ENCODE measurements at regions of chrX and their contacts with region 1.

Region 1: GRCh38 chrX:104195489-104196084 is 29.3 kb downstream of the FAM199X start:
- DNase-seq: peak; percentile 22
- H3K4me3 ChIP-seq: no peak overlapping the region
- H3K27ac ChIP-seq: no peak overlapping the region
- H3K4me1 ChIP-seq: peaks cover 7% of the 10 kb centered on the region
- H3K27me3 ChIP-seq: no peaks in the 10 kb centered on the region
- CTCF ChIP-seq: peak; percentile 79 to 93

Region 2: DNA sequence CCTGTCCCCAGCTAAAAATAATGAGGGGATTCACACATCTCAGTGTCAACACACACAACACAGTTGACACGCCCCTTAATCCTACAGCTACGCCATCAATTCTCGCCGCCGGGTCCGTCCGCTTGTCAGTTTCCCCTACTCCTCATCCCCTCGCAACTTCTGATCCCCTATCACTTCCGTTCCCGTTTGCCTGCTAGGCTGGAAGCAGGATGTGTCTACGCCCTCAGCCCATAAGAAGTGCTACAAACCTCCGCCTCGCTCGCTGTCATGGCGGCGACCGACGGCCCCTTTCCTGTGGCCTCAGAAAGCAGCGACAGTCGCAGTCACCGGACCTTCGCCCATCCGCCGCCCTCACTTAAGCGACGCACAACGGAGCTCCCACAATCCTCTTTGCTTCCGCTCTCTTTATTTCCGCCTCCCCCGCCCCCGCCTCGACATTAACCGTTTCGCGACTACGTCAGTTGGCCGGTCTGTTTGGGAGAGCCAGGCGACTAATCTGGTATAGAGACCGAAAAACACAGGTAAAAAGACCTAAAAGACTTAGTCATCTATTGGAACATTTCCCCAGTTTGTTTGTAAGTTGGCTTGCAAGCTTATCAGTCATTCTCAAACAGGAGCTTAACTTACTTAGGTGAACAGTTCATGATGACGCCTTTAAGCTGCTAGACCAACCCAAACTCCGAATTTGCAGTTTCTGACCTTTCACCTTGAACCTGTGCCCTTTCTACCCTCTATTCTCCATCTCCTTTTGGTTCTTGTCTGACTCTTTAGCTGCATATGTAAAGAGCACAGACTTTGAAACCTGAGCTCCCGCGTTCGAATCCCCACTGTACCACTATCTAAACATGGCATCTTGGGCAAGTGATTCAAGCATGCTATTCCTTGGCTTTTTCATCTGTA is 38.7 kb before region 1 on chrX and contains the start of gene SLC25A53:
- CTCF ChIA-PET with region 1: no interaction called
- dilution Hi-C with region 1: no loop called
- in situ Hi-C with region 1: no loop called
- intact Hi-C with region 1: no loop called
- DNase-seq: peak; percentile 79
- H3K4me3 ChIP-seq: peak within 1 kb of the TSS; percentile 60 to 72 (median 71)
- H3K27ac ChIP-seq: peak within 1 kb of the TSS; percentile 77
- H3K4me1 ChIP-seq: peaks cover 3% of the 10 kb centered on the region
- H3K27me3 ChIP-seq: peaks cover 2% of the 10 kb centered on the region
- CTCF ChIP-seq: no peak
- total RNA-seq, gene SLC25A53: 4.0 to 4.8 TPM

Region 3: GRCh38 chrX:104343428-104344129 is 148.0 kb after region 1 on chrX:
- CTCF ChIA-PET with region 1: no interaction called
- dilution Hi-C with region 1: no loop called
- in situ Hi-C with region 1: no loop called
- intact Hi-C with region 1: loop called (anchors 1 kb)
- DNase-seq: peak; percentile 58
- H3K4me3 ChIP-seq: no peak overlapping the region
- H3K27ac ChIP-seq: peak overlapping the region; percentile 23
- H3K4me1 ChIP-seq: peaks cover 2% of the 10 kb centered on the region
- H3K27me3 ChIP-seq: no peaks in the 10 kb centered on the region
- CTCF ChIP-seq: peak; percentile 63 to 72

Measured in mammary epithelial cell (primary cell).